CD8-positive, alpha-beta memory T cell (primary cell): ENCODE measurements at regions of chr5 and their contacts with region 1.

Region 1: DNA sequence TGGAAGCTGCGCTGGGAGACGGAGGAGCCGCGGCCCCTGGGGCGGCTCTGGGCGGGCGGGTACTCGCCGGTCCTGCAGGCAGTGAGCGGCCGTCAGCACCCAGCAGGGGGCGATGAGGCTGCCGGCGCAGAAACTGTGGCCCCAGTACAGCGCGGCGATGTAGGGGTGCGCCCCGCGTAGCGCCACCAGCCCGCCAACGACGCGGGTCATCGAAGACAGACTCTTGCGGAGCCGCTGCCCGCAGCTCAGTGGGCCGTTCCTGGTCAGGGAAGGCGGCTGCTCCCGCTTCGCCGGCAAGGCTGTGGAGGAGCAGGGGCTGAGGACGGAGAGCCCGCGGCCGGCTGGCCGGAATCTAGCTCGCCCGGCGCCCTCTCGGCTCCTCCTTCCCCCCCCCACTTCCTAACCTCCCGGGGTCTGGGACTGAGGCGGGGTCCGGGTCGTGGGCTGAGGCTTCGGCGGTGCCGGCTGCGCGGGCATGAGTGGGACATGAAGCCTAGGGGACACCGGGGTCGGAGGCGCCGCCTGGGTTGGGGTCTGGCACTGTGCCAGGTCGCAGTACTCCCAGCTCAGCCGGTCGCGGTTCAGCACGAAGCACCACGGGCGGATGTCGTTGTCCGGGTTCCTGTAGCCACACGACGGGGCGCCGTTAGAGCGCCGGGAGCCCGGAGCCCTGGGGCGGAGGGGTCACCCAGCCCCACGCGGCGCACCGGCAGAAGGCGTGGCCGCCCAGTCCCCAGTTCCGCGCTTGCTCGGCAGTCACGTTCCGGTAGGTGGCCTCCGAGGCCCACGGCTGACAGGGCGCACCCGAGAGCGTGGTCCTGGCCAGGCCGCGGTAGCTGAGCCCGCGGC is 3.6 kb upstream of the PFN3 start:
- DNase-seq: peak; percentile 75 to 91 (median 82)
- H3K4me3 ChIP-seq: peak overlapping the region; percentile 69
- H3K4me3 Mint-ChIP-seq: peak overlapping the region; percentile 78 to 91 (median 84)
- H3K27ac ChIP-seq: peak overlapping the region; percentile 57
- H3K27ac Mint-ChIP-seq: peak overlapping the region in 7 of 8 donors; percentile 26 to 94 (median 83)
- H3K4me1 ChIP-seq: peaks cover 35% of the 10 kb centered on the region
- H3K4me1 Mint-ChIP-seq: peaks cover 26 to 42% (median 30%) of the 10 kb centered on the region in 3 donors
- H3K27me3 ChIP-seq: no peaks in the 10 kb centered on the region
- H3K27me3 Mint-ChIP-seq: peaks cover 0 to 11% of the 10 kb centered on the region in 2 donors

Region 2: DNA sequence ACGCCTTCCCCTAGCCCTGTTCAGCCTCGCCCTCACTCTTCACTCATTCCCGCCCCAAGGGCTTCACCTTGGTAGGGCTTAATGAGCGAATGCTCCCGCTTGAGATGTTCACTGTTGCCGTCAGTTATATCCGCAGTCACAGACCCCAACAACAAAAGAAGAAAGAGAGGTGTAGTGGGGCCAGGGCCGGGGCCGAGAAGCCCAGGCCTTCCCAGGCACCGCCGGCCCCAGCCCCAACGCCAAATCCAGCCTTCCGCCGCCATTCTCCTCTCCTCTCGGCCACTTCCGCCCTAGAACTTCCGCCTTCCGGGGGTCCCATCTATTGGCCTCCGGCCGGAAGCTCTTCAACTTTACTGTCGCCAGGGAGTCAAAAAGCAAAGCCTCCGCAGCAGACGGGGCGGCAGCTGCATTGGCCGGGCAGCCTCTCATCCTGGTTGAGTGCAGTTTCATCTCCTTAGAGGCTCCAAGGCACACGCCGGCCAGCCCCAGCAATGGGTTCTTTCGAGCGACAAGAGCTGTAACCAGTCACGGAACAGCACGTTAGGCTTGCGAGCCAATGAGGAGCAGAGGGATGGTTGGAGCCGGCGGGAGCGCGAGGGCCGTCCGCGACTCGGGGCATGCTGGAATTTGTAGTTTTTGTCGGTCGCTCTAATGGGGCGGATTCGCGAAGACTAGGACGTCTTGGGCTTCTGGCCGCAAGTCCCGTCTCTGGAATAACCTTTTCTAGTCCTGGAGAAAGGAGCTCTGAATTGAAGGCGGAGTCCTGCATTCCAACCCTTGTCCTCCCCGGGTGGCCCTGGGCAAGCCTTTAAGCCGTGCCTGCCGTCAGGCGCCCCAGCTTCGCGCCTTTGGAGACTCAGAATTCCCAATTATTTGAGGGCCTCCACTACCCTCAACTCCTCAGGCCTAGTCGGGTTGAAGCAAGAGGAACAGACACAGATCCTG is 52.4 kb before region 1 on chr5 and contains the start of gene LMAN2:
- CTCF ChIA-PET with region 1: interaction called, 37 read pairs
- POLR2A ChIA-PET with region 1: interaction called, 3 read pairs
- DNase-seq: peak; percentile 85 to 94 (median 91)
- H3K4me3 ChIP-seq: peak within 1 kb of the TSS; percentile 93
- H3K4me3 Mint-ChIP-seq: peak within 1 kb of the TSS; percentile 97 to 100 (median 98)
- H3K27ac ChIP-seq: peak within 1 kb of the TSS; percentile 96
- H3K27ac Mint-ChIP-seq: peak within 1 kb of the TSS; percentile 94 to 100 (median 100)
- H3K4me1 ChIP-seq: peaks cover 57% of the 10 kb centered on the region
- H3K4me1 Mint-ChIP-seq: peaks cover 61 to 76% (median 72%) of the 10 kb centered on the region in 3 donors
- H3K27me3 ChIP-seq: no peaks in the 10 kb centered on the region
- H3K27me3 Mint-ChIP-seq: no peaks in the 10 kb centered on the region
- total RNA-seq, gene LMAN2: 112 to 126 TPM

Region 3: DNA sequence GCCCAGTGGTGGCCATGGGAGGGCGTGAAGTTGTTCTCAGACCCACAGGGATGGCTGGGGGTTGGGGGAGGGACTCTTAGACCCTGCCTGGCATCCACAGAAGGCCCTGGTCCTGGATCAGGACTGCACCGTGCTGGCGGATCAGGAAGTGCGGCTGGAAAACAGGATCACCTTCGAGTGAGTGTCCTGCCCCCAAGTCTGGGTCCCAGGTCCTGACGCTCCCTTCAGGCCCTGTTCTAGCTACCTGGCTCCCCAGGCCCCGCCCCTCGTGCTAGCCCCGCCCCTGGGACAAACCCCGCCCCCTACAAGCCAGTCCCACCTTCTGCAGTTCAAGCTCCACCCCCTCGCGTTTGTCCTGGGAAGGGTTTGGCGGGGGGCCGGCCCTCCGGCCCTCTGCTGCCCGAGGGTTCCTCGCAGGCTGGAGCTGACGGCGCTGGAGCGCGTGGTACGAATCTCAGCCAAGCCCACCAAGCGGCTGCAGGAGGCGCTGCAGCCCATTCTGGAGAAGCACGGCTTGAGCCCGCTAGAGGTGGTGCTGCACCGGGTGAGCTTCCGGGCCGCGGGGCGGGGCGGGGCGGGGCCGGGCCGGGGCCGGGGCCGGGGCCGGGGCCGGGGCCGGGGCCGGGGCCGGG is 33.4 kb before region 1 on chr5:
- CTCF ChIA-PET with region 1: interaction called, 64 read pairs
- POLR2A ChIA-PET with region 1: interaction called, 3 read pairs
- DNase-seq: peak; percentile 36 to 78 (median 50)
- H3K4me3 ChIP-seq: no peak overlapping the region
- H3K4me3 Mint-ChIP-seq: peak overlapping the region in 2 of 7 donors; percentile 43 to 64
- H3K27ac ChIP-seq: no peak overlapping the region
- H3K27ac Mint-ChIP-seq: peak overlapping the region in 3 of 8 donors; percentile 29 to 81 (median 51)
- H3K4me1 ChIP-seq: peaks cover 66% of the 10 kb centered on the region
- H3K4me1 Mint-ChIP-seq: peaks cover 57 to 77% (median 64%) of the 10 kb centered on the region in 3 donors
- H3K27me3 ChIP-seq: no peaks in the 10 kb centered on the region
- H3K27me3 Mint-ChIP-seq: peaks cover 0 to 1% of the 10 kb centered on the region in 2 donors

Region 4: DNA sequence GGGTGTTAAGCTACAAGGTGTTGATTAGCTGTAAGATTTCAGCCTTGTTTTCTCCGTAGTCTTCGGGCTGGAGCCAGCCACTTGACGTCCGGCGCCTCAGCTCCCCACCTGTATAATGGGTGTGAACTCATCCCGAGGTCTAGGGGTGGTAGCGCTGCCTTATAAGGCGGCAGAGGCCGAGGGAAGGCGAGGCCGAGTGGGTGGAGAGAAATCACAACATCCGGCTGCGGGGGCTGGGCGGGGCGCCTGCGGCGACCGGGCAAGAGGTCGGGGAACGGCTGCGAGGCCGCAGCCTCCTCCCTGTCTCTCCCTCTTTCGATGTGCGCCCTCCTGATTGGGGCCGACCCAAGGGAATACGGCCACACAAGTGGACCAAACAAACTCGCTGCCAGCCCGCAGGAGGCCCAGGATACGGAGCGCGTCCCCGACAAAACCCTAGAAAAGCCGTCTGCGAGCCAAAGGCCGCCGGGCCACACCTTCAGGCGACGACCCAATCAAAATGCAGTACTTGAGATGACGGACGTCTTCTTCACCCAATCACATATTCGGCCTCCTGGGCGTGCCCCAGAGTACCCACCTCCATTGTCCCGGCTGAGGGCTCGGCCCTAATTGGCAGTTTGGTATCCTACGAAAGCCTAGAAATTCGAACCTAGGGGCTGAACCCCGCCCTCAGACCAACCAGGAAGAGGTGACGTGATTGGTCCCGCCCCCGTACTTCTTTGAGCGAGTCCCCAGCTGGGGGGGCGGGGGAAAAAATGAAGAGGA is 22.0 kb after region 1 on chr5:
- CTCF ChIA-PET with region 1: interaction called, 270 read pairs
- POLR2A ChIA-PET with region 1: interaction called, 54 read pairs
- DNase-seq: peak; percentile 99 to 100 (median 100)
- H3K4me3 ChIP-seq: peak overlapping the region; percentile 93
- H3K4me3 Mint-ChIP-seq: peak overlapping the region; percentile 89 to 96 (median 95)
- H3K27ac ChIP-seq: peak overlapping the region; percentile 90
- H3K27ac Mint-ChIP-seq: peak overlapping the region; percentile 92 to 99 (median 98)
- H3K4me1 ChIP-seq: peaks cover 55% of the 10 kb centered on the region
- H3K4me1 Mint-ChIP-seq: peaks cover 45 to 60% (median 51%) of the 10 kb centered on the region in 3 donors
- H3K27me3 ChIP-seq: no peaks in the 10 kb centered on the region
- H3K27me3 Mint-ChIP-seq: peaks cover 0 to 2% of the 10 kb centered on the region in 2 donors

Region 5: DNA sequence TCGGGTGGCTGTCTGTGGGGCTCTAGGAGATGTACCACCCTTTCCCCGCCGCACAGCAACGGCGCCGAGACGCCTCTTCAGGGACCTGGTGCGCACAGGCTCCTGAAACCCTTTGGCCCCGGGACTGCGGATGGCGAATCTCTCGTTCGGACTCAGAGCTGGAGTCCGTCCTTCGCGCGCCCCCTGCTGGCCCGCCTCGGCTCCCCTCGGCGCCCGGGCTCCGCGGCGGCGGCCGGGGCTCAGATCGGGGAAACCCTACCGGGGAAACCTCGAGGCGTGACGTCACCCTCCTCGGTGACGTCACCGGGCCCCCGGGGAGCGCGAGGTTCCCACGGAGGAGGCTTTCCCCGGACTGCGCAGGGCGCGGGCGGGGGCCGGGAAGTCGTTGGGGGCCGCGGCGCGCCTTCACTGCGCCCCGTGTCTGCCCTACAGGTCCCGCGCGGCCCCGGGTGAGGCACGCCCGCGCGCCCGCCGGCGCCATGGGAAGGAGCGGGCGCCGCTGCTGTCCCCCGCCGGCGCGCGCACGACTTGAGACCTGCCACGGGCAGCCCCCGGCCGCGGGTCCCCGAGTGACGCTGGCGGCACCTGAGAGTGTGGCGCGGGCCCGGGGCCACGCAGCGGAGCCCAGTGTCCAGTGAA is 50.5 kb after region 1 on chr5:
- CTCF ChIA-PET with region 1: interaction called, 307 read pairs
- POLR2A ChIA-PET with region 1: interaction called, 112 read pairs
- DNase-seq: peak; percentile 90 to 97 (median 95)
- H3K4me3 ChIP-seq: peak overlapping the region; percentile 59
- H3K4me3 Mint-ChIP-seq: peak overlapping the region; percentile 46 to 93 (median 89)
- H3K27ac ChIP-seq: peak overlapping the region; percentile 87
- H3K27ac Mint-ChIP-seq: peak overlapping the region in 7 of 8 donors; percentile 66 to 97 (median 85)
- H3K4me1 ChIP-seq: peaks cover 20% of the 10 kb centered on the region
- H3K4me1 Mint-ChIP-seq: peaks cover 19 to 32% (median 19%) of the 10 kb centered on the region in 3 donors
- H3K27me3 ChIP-seq: no peaks in the 10 kb centered on the region
- H3K27me3 Mint-ChIP-seq: peaks cover 0 to 4% of the 10 kb centered on the region in 2 donors

Region 6: DNA sequence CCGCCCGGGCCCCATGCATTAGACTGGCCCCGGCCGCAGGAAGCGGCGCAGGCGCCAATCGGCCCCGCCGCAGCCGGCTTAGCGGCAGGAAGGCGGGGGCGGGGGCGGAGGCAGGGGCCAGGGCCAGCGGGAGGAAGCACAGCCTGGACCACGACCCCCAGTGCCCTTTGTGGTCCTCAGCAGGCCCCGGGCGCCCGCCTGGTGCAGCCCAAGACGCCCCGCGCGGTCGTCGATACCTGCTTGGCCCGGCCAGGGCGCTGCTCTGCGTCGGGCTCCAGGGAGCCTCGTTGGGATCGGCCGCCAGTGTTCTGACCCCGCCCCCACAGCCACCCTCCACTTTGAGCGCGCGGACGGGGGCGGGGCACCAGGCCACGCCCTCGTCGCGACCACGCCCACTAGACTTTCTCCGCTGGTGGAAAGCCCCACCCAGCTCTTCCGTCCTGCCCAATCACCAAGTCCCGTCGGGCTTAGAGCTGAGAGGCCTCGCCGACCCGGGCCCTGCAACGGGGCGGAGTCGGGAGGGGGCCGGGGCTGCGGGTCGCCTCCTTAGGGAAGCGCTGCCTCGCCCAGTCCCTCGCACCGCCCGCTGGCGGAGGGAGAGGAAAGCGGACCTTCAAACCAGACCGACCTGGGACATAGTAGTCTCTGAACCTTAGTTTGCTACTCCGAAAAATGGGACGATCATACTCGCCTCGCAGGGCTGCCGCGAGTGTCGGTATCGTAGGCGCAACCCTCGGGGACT is 93.4 kb after region 1 on chr5 and contains the start of gene PDLIM7:
- CTCF ChIA-PET with region 1: interaction called, 86 read pairs
- POLR2A ChIA-PET with region 1: interaction called, 5 read pairs
- DNase-seq: peak; percentile 89 to 95 (median 90)
- H3K4me3 ChIP-seq: peak within 1 kb of the TSS; percentile 81
- H3K4me3 Mint-ChIP-seq: peak within 1 kb of the TSS; percentile 69 to 89 (median 86)
- H3K27ac ChIP-seq: peak within 1 kb of the TSS; percentile 69
- H3K27ac Mint-ChIP-seq: peak within 1 kb of the TSS in 7 of 8 donors; percentile 0 to 91 (median 75)
- H3K4me1 ChIP-seq: peaks cover 22% of the 10 kb centered on the region
- H3K4me1 Mint-ChIP-seq: peaks cover 13 to 42% (median 23%) of the 10 kb centered on the region in 3 donors
- H3K27me3 ChIP-seq: no peaks in the 10 kb centered on the region
- H3K27me3 Mint-ChIP-seq: peaks cover 0 to 2% of the 10 kb centered on the region in 2 donors
- total RNA-seq, gene PDLIM7: 28.4 to 30.4 TPM